H1 (cell line): ENCODE measurements at regions of chr16 and their contacts with region 1.

Region 1: GRCh38 chr16:3690470-3690928 is 26.8 kb downstream of the TRAP1 start:
- DNase-seq: peak; percentile 78 to 95
- H3K4me3 ChIP-seq: no peak overlapping the region
- H3K27ac ChIP-seq: no peak overlapping the region
- H3K4me1 ChIP-seq: no peaks in the 10 kb centered on the region
- H3K27me3 ChIP-seq: no peaks in the 10 kb centered on the region
- CTCF ChIP-seq: peak; percentile 83 to 97 (median 89)
- EP300 ChIP-seq: no peak
- POLR2A ChIP-seq: no peak
- RAD21 ChIP-seq: peak; percentile 82 to 83

Region 2: DNA sequence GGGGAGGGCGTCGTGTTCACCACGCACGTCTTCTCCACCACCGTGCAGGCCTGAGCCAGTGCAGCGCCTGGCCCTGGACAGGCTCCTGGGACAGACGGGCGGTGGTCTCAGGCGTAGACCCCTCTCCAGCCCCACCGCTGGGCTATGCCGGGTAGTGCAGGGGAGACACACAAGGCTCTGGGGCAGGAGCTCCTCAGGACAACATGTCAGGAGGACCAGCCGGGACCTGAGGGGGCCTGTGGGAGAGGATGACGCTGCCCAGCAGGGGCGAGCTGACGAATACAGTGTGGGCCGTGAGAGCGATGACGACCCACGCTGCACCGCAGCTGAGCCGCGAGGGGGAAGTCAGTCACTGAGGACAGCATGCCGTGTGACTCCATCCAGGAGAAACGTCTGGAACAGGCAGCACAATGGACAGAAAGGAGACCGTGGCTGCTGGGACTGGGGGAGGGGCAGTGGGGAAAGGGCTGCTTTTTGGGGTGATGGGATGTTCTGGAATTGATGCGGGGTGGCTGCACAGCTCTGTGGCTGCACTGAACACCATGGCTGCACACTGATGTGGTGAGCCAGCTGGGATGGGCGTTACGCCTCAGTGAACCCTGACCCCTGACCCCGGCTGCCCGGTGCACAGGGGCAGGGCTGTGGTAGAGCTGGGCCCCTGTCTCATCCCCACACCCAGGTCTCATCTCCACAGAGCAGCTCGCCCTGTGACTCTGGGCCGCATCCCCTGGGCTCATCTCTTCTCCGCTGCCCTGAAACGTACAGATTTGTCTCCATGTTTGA is 15.8 kb before region 1 on chr16:
- CTCF ChIA-PET with region 1: interaction called, 15 read pairs
- POLR2A ChIA-PET with region 1: interaction called, 8 read pairs
- DNase-seq: no peak
- H3K4me3 ChIP-seq: no peak overlapping the region
- H3K27ac ChIP-seq: no peak overlapping the region
- H3K4me1 ChIP-seq: no peaks in the 10 kb centered on the region
- H3K27me3 ChIP-seq: no peaks in the 10 kb centered on the region
- CTCF ChIP-seq: peak; percentile 27 to 39 (median 34); a peak in 3 of 4 replicates
- EP300 ChIP-seq: no peak
- POLR2A ChIP-seq: no peak
- RAD21 ChIP-seq: peak; percentile 19 to 41; a peak in 3 of 4 replicates

Region 3: DNA sequence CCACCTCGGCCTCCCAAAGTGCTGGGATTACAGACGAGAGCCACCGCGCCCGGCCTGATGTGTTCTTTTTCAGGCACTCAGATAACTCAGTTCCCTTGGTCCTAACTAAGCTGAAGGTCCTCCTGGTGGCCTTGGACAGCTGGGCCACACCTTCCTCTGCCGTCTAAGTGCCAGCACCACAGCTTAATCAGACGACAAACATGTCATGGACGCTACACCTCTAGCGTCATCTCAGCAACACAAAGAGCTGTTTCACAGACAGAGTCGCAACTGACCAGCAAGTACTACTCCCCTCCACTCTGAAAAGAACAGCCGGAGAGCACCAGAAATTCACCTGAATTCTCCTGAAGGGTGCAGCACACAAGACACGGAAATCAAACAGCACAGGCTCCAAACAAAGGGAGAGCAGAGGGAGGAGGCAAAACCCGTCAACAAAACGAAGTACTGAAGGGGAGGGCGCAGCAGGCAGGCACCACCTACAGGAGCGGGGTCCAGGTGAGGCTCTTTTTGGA is 22.4 kb after region 1 on chr16:
- CTCF ChIA-PET with region 1: interaction called, 28 read pairs
- POLR2A ChIA-PET with region 1: interaction called, 6 read pairs
- DNase-seq: no peak
- H3K4me3 ChIP-seq: no peak overlapping the region
- H3K27ac ChIP-seq: peak overlapping the region; percentile 16; the same call in 1 of the 2 replicates
- H3K4me1 ChIP-seq: peaks cover 0 to 6% (median 1%) of the 10 kb centered on the region in 4 experiments; a peak in 4 of 7 replicates
- H3K27me3 ChIP-seq: no peaks in the 10 kb centered on the region
- CTCF ChIP-seq: no peak
- EP300 ChIP-seq: no peak
- POLR2A ChIP-seq: no peak
- RAD21 ChIP-seq: no peak